Aorta (tissue), 5 donors: ENCODE measurements at regions of chr3 and their contacts with region 1.

Region 1: DNA sequence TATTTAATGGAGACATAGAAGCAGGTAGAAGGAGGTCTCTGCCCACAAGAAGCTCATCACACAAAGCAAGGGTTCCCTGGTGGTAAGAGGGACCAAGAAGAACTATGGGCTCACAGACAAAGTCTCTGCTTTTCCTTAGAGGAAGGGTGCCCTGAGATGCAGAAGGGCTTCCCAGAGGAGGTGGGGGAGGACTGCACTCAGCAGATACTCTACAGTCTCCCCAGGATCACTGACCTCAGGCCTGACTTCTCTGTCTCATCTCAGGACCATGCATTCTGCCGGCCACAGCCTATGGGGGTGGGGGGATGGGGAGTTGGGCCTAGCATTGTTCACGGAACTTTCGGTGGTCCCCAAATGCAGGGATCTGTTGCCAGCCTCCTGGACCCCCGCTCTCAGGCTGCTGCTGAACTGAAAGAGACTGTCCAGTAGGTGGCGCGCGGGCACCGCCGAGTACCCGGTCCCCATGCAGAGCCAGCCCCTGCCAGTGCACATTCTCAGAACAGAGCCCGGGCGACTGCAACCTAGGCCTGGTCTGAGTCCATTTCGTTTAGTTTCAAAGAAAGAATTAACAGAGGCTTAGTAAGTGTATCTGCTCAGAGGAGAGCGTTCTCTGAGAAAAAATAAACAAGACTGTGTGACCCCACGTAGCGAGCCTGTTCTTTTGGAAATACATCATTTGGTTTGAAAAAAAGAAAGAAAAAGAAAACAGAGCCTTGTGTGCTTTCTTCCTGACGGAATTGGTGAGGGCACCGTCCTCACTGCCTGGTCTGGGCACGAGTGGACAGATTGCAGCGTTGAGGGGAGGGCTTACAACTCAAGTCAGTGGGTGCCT is 74.1 kb downstream of the LRTM1 start:
- DNase-seq: peak; percentile 81 to 92
- ATAC-seq: peak; percentile 90
- H3K4me3 ChIP-seq: no peak overlapping the region
- H3K27ac ChIP-seq: no peak overlapping the region
- H3K4me1 ChIP-seq: no peaks in the 10 kb centered on the region
- H3K27me3 ChIP-seq: no peaks in the 10 kb centered on the region

Region 2: DNA sequence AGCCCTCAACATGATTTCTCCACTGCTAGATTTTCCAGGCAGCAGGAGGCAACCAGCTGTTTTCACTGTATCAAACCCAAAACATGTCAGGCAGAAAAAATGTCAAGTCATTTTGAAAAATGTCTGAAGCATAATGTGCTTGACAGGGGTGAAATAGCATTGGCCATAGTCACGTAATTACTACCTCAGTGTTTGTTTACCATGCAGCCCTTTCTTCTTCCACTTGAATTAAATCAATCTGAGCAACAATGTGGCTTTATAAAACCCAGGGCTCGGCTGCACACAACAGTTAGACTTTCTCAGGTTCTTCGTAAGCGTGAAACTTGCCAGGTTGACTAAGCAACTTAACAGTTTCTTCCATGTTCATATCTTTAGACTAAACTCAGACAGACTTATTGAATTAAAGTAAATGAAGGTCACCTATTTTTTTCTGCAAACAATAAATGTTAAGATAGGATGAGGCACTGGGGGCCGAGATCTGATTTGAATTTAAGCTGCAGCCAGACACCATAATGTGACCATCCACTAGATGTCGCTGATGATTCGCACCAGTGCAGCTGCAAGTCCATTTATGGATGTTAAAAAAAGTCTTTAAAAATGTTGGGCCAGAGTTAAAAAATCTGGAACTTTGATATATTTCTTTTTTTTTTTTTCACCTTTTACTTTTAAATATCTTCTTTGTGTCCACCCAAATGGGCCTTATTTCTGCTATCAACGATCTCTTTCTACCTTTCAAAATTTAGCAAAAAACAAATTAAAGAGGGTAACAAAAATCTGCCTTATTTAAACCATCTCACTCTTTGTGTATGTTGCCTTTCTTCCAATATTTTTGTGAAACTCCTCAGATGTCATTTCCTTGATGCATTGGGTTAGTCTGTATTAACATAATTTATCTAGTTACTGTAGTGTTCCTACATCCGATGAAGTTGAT is 425.6 kb before region 1 on chr3:
- intact Hi-C with region 1: loop called in 1 of 2 experiments (anchors 10 kb)
- DNase-seq: peak in 1 of 2 donors; percentile 59
- ATAC-seq: no peak
- H3K4me3 ChIP-seq: no peak overlapping the region
- H3K27ac ChIP-seq: no peak overlapping the region
- H3K4me1 ChIP-seq: no peaks in the 10 kb centered on the region
- H3K27me3 ChIP-seq: no peaks in the 10 kb centered on the region

Region 3: DNA sequence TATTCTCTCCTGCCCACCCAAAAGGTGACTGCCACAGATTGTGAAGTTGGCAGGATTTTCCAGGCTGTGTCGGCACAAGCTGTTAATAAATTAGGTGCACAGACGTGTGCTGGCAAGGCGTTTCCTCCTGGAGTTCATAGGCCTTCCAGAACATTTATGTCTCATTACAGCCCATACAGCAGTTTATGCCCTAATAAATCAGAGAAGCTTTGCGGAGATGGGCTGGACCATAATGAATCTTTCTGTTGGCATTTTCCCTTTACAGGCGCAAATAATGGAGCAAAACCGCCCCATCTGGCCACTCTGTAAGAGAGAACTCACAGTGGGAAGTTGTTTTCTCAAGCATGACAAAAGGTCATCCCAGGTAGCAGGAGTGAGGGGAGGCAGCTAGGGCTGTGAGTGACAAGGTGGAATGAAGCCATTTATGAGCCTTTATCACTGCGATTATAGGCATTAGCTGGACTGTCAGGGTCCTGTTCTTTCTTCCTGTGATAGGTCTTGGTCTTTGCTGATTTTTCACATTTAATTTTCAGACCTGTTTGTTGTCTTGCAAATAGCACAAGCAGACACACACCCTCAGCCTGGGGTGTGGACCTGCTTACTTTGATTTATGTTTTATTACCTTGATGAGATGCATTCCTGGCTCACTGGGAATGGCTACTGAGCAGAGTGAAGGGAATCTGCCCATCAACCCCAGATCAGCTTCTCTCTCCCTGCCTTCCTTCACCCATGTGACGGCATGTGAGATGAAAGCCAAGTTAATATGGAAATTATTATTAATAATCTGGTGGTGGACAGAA is 183.4 kb before region 1 on chr3:
- intact Hi-C with region 1: no loop called
- DNase-seq: no peak
- ATAC-seq: no peak
- H3K4me3 ChIP-seq: no peak overlapping the region
- H3K27ac ChIP-seq: no peak overlapping the region
- H3K4me1 ChIP-seq: no peaks in the 10 kb centered on the region
- H3K27me3 ChIP-seq: no peaks in the 10 kb centered on the region

Region 4: GRCh38 chr3:55180936-55181535 is 327.2 kb after region 1 on chr3:
- intact Hi-C with region 1: loop called (anchors 5 kb)
- DNase-seq: no peak
- ATAC-seq: no peak
- H3K4me3 ChIP-seq: no peak overlapping the region
- H3K27ac ChIP-seq: no peak overlapping the region
- H3K4me1 ChIP-seq: no peaks in the 10 kb centered on the region
- H3K27me3 ChIP-seq: no peaks in the 10 kb centered on the region

Region 5: DNA sequence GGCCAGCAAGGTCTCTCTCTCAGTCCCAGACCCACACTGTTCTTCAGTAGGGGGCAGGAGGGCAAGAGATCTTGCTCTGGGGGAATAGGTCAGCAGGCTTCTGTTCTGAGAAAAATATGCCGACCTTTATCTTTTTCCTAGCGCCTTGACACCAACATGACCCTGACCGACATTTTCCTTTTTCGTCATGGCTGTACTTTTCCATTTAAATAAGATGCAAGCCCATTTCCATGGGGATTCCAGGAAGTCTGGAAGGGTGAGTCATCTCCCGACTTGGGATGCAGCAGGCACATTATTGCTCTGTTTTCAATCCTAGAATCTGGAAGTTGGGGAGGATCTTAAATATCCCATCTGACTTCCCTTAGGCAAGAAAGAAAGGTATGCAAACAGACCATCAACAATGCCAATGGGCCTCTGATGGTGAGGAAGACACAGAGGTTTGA is 335.6 kb after region 1 on chr3:
- intact Hi-C with region 1: loop called (anchors 5 kb)
- DNase-seq: no peak
- ATAC-seq: no peak
- H3K4me3 ChIP-seq: no peak overlapping the region
- H3K27ac ChIP-seq: no peak overlapping the region
- H3K4me1 ChIP-seq: no peaks in the 10 kb centered on the region
- H3K27me3 ChIP-seq: no peaks in the 10 kb centered on the region

Region 6: DNA sequence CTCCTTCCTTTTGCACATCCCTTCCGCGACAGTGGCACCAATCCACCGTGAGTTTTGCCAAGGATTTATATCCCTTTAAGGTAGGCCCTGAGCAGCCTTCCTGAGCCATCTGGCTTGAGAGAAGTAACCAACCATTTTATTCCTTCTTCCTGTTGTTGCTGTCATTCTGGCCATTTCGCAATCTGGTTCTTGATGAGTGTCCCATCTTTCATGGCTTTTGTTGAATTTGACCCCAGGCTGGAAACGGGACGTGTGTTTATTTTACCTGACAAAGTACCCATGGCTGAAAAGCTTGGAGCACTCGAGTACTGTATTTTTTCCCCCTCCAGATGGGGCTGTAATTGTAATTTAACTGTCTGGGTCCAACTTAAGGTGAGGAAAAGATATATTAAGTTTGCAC is 459.9 kb after region 1 on chr3:
- intact Hi-C with region 1: no loop called
- DNase-seq: no peak
- ATAC-seq: no peak
- H3K4me3 ChIP-seq: no peak overlapping the region
- H3K27ac ChIP-seq: no peak overlapping the region
- H3K4me1 ChIP-seq: no peaks in the 10 kb centered on the region
- H3K27me3 ChIP-seq: peaks cover 0 to 1% of the 10 kb centered on the region in 2 donors

Region 7: DNA sequence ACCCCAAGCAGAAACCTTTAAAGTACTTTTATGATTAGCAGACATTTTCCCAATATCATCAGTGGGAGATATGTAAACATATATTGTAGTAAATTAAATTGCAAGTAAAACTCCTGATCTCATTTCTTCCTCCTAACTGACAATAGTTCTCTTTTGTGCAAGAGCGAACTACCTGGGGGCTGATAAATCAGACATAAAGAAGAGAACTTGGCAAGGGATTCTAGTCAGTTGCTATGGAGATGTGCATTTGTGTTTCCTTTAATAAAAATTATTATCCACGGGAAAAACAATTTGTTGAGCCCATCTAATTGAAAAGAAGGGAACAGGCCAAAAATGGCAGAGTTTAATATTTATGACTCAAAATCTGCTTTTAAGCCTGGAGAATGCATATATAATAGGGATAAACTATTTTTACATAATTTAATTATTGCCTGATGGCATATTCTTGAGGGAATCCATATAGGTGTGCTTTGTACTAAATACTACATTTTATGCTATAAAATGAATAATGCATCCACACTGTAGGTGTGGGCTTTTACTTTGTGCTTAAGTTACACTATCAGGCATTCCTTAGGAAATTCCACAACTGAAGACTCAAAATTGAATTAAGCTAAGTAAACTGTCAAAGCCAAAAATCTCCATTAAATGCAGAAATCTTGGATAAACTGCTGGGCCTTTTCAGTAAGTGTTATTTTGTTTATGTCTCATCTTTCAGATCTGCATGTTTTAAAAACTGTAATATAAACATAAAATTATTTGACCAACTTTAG is 1356.4 kb after region 1 on chr3:
- intact Hi-C with region 1: no loop called
- DNase-seq: no peak
- ATAC-seq: no peak
- H3K4me3 ChIP-seq: no peak overlapping the region
- H3K27ac ChIP-seq: no peak overlapping the region
- H3K4me1 ChIP-seq: no peaks in the 10 kb centered on the region
- H3K27me3 ChIP-seq: peaks cover 0 to 1% of the 10 kb centered on the region in 2 donors

Region 8: GRCh38 chr3:56251343-56251945 is 1397.7 kb after region 1 on chr3:
- intact Hi-C with region 1: loop called in 1 of 2 experiments (anchors 10 kb)
- DNase-seq: no peak
- ATAC-seq: no peak
- H3K4me3 ChIP-seq: no peak overlapping the region
- H3K27ac ChIP-seq: no peak overlapping the region
- H3K4me1 ChIP-seq: no peaks in the 10 kb centered on the region
- H3K27me3 ChIP-seq: no peaks in the 10 kb centered on the region